ENCODE measurements at regions of chr12 and their contacts with region 1.

Region 1: DNA sequence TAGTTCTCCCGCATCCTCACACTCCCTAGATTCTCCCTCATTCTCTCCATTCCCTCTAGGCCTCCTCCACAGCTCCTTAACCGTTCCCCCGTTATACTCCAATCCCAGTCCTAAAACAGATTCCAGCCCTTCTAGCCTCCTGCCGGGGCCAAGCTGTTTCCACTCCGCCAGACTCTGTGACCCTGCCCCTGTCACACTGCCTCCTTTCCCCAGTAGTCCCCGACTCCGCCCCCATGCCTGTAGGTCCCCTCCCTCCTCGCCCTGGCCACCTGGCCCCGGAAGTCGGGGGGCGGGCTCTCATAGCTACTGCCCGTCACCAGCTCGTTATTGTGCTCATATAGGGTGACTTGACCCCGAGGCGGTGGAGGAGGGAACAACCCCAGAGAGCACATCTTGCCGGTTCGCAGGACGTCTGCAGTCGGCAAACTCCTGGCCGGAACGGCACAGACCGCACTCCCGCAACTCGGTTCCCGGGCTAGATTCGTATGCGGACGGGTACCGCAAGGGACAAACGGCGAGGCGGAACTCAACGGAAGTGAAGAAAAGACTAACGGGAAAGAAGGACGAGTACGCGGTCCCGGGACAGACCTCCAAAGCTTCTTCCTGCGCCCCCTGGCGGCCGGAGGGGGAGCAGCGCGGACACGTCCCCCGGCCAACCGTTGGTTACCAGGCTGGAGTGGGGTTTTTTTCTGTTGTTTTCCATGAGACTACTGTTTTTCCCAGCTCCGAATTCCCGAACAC is at the start of gene AAAS:
- DNase-seq: peak; percentile 95 to 96
- ATAC-seq: peak; percentile 84 to 86
- H3K4me3 ChIP-seq: peak within 1 kb of the TSS; percentile 71 to 93 (median 90)
- H3K27ac ChIP-seq: peak within 1 kb of the TSS; percentile 84 to 97 (median 94)
- H3K4me1 ChIP-seq: peaks cover 23 to 37% of the 10 kb centered on the region in 2 donors
- H3K27me3 ChIP-seq: no peaks in the 10 kb centered on the region
- CTCF ChIP-seq: peak; percentile 97 to 100 (median 99)
- POLR2A ChIP-seq: peak; percentile 69 to 82
- total RNA-seq, gene AAAS: 30.5 to 47.9 (median 38.5) TPM

Region 2: GRCh38 chr12:53213348-53213747 is 107.9 kb before region 1 on chr12:
- in situ Hi-C with region 1: no loop called
- intact Hi-C with region 1: loop called (anchors 1 kb)
- DNase-seq: peak; percentile 66 to 74
- ATAC-seq: peak; percentile 75 to 86
- H3K4me3 ChIP-seq: no peak overlapping the region
- H3K27ac ChIP-seq: no peak overlapping the region
- H3K4me1 ChIP-seq: peaks cover 32 to 45% of the 10 kb centered on the region in 2 donors
- H3K27me3 ChIP-seq: no peaks in the 10 kb centered on the region
- CTCF ChIP-seq: peak; percentile 94 to 97 (median 97)
- POLR2A ChIP-seq: no peak

Region 3: DNA sequence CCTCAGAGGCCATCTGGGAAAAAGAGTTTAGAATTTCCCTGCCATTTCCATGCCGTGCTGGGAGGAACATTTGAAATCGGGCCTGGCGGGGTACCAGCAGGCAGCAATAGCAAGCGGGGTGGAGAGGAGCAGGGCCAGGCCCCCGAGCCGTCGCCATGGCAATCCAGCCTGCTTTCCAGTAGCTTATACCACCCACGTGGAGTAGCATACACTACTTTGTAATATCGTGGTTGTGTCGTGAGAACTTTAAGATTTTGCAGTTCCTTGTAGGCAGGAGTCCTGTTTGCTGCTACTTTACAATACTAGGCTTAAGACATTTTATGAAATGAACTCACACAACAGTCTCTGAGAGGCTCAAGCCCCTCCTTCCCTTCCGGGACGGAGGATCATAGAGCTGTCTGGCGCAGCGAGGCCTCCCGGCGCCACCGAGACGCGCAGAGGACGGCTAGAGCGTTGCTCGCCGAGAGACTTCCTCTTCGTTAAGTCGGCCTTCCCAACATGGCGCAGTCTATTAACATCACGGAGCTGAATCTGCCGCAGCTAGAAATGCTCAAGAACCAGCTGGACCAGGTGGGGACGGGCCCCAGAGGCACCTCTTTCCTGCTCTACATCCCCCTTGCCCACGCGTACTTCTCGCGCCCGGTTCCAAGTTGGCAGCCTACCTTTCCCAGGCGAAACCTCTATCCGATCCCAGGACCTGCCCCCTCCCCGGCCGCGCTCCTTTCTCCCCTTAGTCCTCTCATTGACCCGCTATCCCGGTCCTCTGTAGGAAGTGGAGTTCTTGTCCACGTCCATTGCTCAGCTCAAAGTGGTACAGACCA is 26.0 kb before region 1 on chr12 and contains the start of gene PFDN5:
- in situ Hi-C with region 1: no loop called
- intact Hi-C with region 1: loop called (anchors 1 kb)
- DNase-seq: peak; percentile 83 to 87
- ATAC-seq: peak; percentile 90 to 93
- H3K4me3 ChIP-seq: peak within 1 kb of the TSS; percentile 77 to 97 (median 89)
- H3K27ac ChIP-seq: peak within 1 kb of the TSS; percentile 83 to 90 (median 88)
- H3K4me1 ChIP-seq: peaks cover 28% of the 10 kb centered on the region in 2 donors
- H3K27me3 ChIP-seq: no peaks in the 10 kb centered on the region
- CTCF ChIP-seq: peak in 2 of 5 experiments; percentile 32 to 44
- POLR2A ChIP-seq: peak; percentile 56 to 62
- total RNA-seq, gene PFDN5: 341 to 464 (median 358) TPM

Region 4: GRCh38 chr12:53379389-53380103 is 58.3 kb after region 1 on chr12:
- in situ Hi-C with region 1: no loop called
- intact Hi-C with region 1: loop called (anchors 1 kb)
- DNase-seq: peak; percentile 100
- ATAC-seq: peak; percentile 84 to 89
- H3K4me3 ChIP-seq: peak overlapping the region; percentile 57 to 86 (median 66)
- H3K27ac ChIP-seq: peak overlapping the region; percentile 93 to 99 (median 96)
- H3K4me1 ChIP-seq: peaks cover 43 to 46% of the 10 kb centered on the region in 2 donors
- H3K27me3 ChIP-seq: no peaks in the 10 kb centered on the region
- CTCF ChIP-seq: no peak
- POLR2A ChIP-seq: peak; percentile 73 to 83

Region 5: GRCh38 chr12:53508534-53509199 is 187.4 kb after region 1 on chr12:
- in situ Hi-C with region 1: loop called in 1 of 4 experiments (anchors 10 kb)
- intact Hi-C with region 1: loop called (anchors 1 kb)
- DNase-seq: peak; percentile 65 to 79
- ATAC-seq: peak; percentile 91 to 92
- H3K4me3 ChIP-seq: no peak overlapping the region
- H3K27ac ChIP-seq: peak overlapping the region in 3 of 4 donors; percentile 44 to 55 (median 48)
- H3K4me1 ChIP-seq: peaks cover 0 to 10% of the 10 kb centered on the region in 2 donors
- H3K27me3 ChIP-seq: no peaks in the 10 kb centered on the region
- CTCF ChIP-seq: peak; percentile 84 to 94 (median 90)
- POLR2A ChIP-seq: no peak

Region 6: GRCh38 chr12:53727310-53728041 is 406.2 kb after region 1 on chr12 and contains the start of gene CALCOCO1:
- in situ Hi-C with region 1: no loop called
- intact Hi-C with region 1: loop called (anchors 5 kb)
- DNase-seq: peak; percentile 98 to 99
- ATAC-seq: peak; percentile 96 to 97
- H3K4me3 ChIP-seq: peak within 1 kb of the TSS; percentile 69 to 93 (median 82)
- H3K27ac ChIP-seq: peak within 1 kb of the TSS; percentile 87 to 98 (median 93)
- H3K4me1 ChIP-seq: peaks cover 18% of the 10 kb centered on the region in 2 donors
- H3K27me3 ChIP-seq: no peaks in the 10 kb centered on the region
- CTCF ChIP-seq: no peak
- POLR2A ChIP-seq: peak; percentile 70 to 91
- total RNA-seq, gene CALCOCO1: 158 to 385 (median 239) TPM

Region 7: DNA sequence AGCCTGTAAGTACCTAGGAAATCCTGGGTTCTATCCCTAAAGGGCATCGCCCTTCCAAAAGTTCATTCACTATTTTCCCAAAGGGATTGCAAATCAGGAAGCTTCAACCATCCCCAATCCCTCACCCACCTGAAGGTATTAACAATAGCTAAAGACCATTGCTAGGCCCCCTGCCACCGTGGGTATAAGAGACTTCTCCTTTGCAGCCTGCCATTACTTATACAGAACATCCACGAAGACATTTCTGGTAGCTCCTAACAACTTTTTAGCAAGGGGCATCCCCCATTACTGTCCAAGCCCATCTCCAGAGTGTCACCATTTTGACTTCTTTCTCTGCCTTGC is 867.9 kb after region 1 on chr12:
- in situ Hi-C with region 1: no loop called
- intact Hi-C with region 1: no loop called
- DNase-seq: no peak
- ATAC-seq: no peak
- H3K4me3 ChIP-seq: peak overlapping the region; percentile 8 to 93 (median 89)
- H3K27ac ChIP-seq: peak overlapping the region in 3 of 4 donors; percentile 79 to 87 (median 80)
- H3K4me1 ChIP-seq: peaks cover 18 to 21% of the 10 kb centered on the region in 2 donors
- H3K27me3 ChIP-seq: no peaks in the 10 kb centered on the region
- CTCF ChIP-seq: no peak
- POLR2A ChIP-seq: no peak